Caco-2 (cell line): ENCODE measurements at regions of chr11 and their contacts with region 1.

Region 1: GRCh38 chr11:72724851-72725730 is 27.1 kb downstream of the ARAP1 start:
- DNase-seq: peak; percentile 83 to 90
- H3K4me3 ChIP-seq: no peak overlapping the region
- H3K4me3 Mint-ChIP-seq: no peak overlapping the region
- H3K27ac Mint-ChIP-seq: no peak overlapping the region
- H3K4me1 ChIP-seq: peaks cover 4% of the 10 kb centered on the region; the same call in 1 of the 2 replicates
- H3K4me1 Mint-ChIP-seq: no peaks in the 10 kb centered on the region
- H3K27me3 ChIP-seq: no peaks in the 10 kb centered on the region
- H3K27me3 Mint-ChIP-seq: no peaks in the 10 kb centered on the region
- CTCF ChIP-seq: peak; percentile 96 to 97

Region 2: DNA sequence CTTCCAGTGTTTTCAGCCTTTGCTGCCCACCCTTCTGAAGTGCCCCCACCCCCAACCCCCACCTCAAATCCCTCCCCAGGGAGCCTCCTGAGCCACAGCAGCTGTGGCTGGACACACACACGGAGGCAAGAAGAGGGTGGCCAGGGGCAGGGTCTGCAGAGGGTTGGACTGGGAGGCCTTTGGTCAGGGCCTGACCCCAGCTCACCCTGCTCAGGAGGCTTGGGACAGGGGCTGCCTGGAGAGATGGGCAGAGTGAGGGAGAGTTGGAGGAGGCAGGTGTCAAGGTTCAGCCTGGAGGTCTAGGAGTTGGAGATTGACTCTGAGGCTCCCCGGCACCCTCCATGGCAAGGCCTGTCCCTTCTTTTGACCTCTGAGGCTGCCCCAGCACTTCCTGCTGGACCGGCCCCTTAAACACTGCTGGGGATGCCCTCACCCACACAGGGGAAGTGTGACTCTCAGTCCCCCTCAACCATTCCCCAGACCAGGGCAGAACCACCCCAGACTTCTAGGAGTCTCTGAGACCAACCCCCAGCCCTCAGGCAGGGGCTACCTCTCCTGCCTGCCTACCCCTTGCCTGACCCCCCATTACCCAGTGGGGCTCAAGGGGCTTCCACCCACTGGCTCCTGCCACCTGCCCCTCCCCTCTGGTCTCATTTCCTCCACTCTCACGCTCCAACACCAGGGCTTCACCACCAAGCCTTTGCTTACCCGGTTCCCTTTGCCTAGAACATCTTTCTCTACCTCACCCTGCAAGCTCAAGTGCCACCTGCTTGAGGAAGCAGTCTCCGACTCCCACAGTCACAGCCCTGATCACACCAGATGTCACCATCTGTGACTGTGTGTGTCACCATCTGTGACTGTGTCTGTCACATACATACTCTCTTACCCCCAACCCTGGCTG is 18.5 kb after region 1 on chr11:
- CTCF ChIA-PET with region 1: interaction called, 20 read pairs
- POLR2A ChIA-PET with region 1: no interaction called
- intact Hi-C with region 1: no loop called
- DNase-seq: peak in 1 of 2 experiments; percentile 40
- H3K4me3 ChIP-seq: no peak overlapping the region
- H3K4me3 Mint-ChIP-seq: no peak overlapping the region
- H3K27ac Mint-ChIP-seq: peak overlapping the region; percentile 91
- H3K4me1 ChIP-seq: peaks cover 29% of the 10 kb centered on the region
- H3K4me1 Mint-ChIP-seq: peaks cover 41% of the 10 kb centered on the region
- H3K27me3 ChIP-seq: no peaks in the 10 kb centered on the region
- H3K27me3 Mint-ChIP-seq: no peaks in the 10 kb centered on the region
- CTCF ChIP-seq: no peak

Region 3: GRCh38 chr11:72787216-72788104 is 62.4 kb after region 1 on chr11:
- CTCF ChIA-PET with region 1: interaction called, 32 read pairs
- POLR2A ChIA-PET with region 1: interaction called, 3 read pairs
- intact Hi-C with region 1: no loop called
- DNase-seq: peak; percentile 90 to 98
- H3K4me3 ChIP-seq: no peak overlapping the region; the same call in 1 of the 2 replicates
- H3K4me3 Mint-ChIP-seq: peak overlapping the region; percentile 50
- H3K27ac Mint-ChIP-seq: peak overlapping the region; percentile 99
- H3K4me1 ChIP-seq: peaks cover 75% of the 10 kb centered on the region
- H3K4me1 Mint-ChIP-seq: peaks cover 67% of the 10 kb centered on the region
- H3K27me3 ChIP-seq: no peaks in the 10 kb centered on the region
- H3K27me3 Mint-ChIP-seq: no peaks in the 10 kb centered on the region
- CTCF ChIP-seq: peak; percentile 65 to 72

Region 4: DNA sequence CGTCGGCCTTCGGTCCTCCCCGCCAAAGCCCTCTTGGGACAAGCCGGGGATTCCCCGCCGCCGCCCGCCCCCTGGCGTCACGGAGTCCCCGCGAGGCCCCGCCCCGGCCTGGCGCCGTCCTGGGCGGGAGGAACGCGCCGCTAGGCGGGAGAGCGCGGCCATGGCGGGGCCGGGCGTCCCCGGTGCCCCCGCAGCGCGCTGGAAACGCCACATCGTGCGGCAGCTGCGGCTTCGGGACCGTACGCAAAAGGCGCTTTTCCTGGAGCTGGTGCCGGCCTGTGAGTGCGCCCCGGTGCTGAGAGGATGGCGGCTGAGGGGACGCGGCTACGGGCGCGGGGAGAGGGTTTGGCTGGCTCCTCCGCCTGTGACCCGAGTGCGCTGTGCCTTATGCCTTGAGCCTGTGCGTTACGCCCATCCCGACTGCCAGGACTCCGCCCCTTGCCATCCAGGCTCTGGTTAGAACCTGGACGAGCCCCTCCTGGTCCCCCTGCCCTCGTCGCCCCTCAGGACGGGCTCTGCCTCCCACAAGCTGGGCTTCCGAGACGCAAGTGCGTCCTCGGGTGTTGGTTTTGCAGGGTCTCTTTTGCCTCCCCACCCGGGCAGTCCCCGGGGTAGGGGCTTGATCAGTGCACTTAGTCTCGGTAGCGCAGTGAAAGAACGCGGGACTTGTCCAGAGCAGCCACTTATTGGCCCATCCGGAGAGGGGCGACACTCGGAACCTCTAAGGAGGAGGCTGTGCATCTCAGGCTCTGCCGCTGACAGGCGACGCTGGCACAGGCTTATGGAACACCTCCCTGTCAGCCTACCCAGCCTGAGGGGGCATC is 89.4 kb after region 1 on chr11 and contains the start of gene ATG16L2:
- CTCF ChIA-PET with region 1: interaction called, 26 read pairs
- POLR2A ChIA-PET with region 1: no interaction called
- intact Hi-C with region 1: loop called (anchors 1 kb)
- DNase-seq: peak; percentile 91 to 98
- H3K4me3 ChIP-seq: peak within 1 kb of the TSS; percentile 88
- H3K4me3 Mint-ChIP-seq: peak within 1 kb of the TSS; percentile 98
- H3K27ac Mint-ChIP-seq: peak within 1 kb of the TSS; percentile 97
- H3K4me1 ChIP-seq: no peaks in the 10 kb centered on the region; the same call in 1 of the 2 replicates
- H3K4me1 Mint-ChIP-seq: peaks cover 29% of the 10 kb centered on the region
- H3K27me3 ChIP-seq: no peaks in the 10 kb centered on the region
- H3K27me3 Mint-ChIP-seq: no peaks in the 10 kb centered on the region
- CTCF ChIP-seq: peak; percentile 19 to 41
- total RNA-seq, gene ATG16L2: 19.3 and 25.0 TPM in 2 replicates

Region 5: DNA sequence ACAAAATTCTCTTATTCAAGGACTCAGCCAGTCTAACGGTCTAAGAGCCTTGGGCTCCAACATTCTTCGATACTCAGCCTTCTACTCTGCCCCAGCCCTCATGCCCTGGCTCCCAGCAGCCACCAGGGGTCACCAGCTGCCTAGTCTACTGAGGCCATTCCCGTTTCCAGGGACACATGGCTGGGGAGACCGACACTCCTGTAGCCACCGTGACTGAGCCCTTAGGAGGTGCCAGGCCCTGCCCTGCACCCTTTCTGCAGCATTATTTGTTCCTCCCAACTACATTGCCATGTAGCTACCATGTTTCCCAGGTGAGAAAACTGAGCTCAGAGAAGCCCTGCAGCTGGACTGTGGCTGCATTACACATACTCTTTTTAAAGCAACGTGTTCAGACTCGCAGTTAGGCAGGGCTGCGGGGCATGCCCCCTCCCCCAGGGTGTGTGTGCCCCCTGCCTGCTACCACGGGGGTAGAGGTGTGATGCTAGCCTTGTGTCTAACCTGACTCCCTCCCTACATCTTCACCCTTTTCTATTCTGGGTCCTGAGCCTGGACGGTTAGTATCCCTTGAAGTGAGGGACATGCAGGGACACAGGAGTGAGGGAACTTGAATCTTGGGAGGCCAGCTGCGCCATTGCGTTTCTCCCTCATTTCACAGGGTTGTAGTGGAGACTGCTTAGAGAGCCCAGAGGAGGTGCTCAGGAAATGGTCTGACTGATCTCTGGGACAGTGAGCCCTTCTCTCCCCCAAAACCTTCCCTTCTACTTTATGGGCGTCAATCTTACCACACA is 106.6 kb after region 1 on chr11:
- CTCF ChIA-PET with region 1: interaction called, 8 read pairs
- POLR2A ChIA-PET with region 1: no interaction called
- intact Hi-C with region 1: loop called (anchors 1 kb)
- DNase-seq: peak; percentile 89 to 93
- H3K4me3 ChIP-seq: no peak overlapping the region
- H3K4me3 Mint-ChIP-seq: no peak overlapping the region
- H3K27ac Mint-ChIP-seq: peak overlapping the region; percentile 58
- H3K4me1 ChIP-seq: peaks cover 10% of the 10 kb centered on the region
- H3K4me1 Mint-ChIP-seq: peaks cover 24% of the 10 kb centered on the region
- H3K27me3 ChIP-seq: no peaks in the 10 kb centered on the region
- H3K27me3 Mint-ChIP-seq: no peaks in the 10 kb centered on the region
- CTCF ChIP-seq: peak; percentile 98 to 99